IMR-90 (cell line): ENCODE measurements at regions of chr22 and their contacts with region 1.

Region 1: DNA sequence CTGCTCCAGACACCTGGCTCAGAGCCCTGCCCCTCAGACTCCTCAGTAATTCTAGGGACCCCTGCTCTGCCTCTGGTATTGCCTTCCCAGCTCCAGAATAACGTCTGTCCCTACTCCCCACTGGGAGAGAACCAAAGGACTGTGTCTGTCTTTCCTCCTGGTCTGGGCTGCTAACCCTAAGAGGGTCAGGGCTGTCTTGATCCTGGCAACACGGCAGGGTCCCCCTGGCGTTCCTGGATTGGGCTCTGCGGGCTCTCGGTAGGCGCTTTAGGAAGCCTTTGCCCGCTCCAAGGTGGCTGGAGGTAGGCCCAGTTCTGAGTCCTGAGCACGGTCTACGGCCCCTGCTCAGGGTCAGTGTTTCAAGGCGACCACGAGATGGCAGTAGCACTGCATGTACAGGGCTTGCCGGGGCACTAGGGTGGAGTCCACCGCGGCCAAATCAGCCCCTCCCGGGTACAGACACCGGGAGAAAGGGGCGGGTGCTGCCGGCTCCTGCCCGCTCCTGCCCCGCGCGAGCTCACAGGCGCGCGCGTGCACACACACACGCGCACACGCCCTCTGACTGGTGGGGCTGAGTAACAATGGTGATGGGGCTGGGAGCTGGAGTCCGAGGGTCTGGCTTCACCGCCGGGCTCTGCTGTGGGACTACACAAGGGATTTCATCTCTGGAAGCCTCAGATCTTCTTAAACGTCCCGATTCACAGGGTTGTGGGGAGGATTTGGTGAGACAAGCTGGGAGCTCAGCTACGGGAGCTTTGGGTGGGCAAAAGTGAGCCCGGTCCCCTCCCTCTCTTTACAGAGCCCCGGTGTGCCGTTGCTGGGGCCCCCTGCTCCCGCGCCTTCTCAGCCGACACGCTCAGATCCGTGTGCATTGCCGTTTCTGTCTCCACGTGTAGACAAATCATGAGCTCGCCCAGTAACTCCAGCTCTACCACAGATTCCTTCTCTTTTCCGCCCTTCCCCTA is 30.1 kb upstream of the HMOX1 start:
- DNase-seq: peak; percentile 89
- ATAC-seq: peak; percentile 94
- H3K4me3 ChIP-seq: peak overlapping the region; percentile 43
- H3K27ac ChIP-seq: peak overlapping the region; percentile 38
- H3K4me1 ChIP-seq: peaks cover 12% of the 10 kb centered on the region
- H3K27me3 ChIP-seq: no peaks in the 10 kb centered on the region
- CTCF ChIP-seq: peak; percentile 95
- POLR2A ChIP-seq: peak; percentile 60; the same call in 1 of the 2 replicates
- RAD21 ChIP-seq: peak; percentile 95

Region 2: GRCh38 chr22:34858066-34858465 is 492.8 kb before region 1 on chr22:
- CTCF ChIA-PET with region 1: no interaction called
- POLR2A ChIA-PET with region 1: no interaction called
- dilution Hi-C with region 1: no loop called
- in situ Hi-C with region 1: no loop called
- intact Hi-C with region 1: no loop called
- DNase-seq: no peak
- ATAC-seq: no peak
- H3K4me3 ChIP-seq: no peak overlapping the region
- H3K27ac ChIP-seq: no peak overlapping the region
- H3K4me1 ChIP-seq: no peaks in the 10 kb centered on the region
- H3K27me3 ChIP-seq: no peaks in the 10 kb centered on the region
- CTCF ChIP-seq: no peak
- POLR2A ChIP-seq: no peak
- RAD21 ChIP-seq: no peak

Region 3: DNA sequence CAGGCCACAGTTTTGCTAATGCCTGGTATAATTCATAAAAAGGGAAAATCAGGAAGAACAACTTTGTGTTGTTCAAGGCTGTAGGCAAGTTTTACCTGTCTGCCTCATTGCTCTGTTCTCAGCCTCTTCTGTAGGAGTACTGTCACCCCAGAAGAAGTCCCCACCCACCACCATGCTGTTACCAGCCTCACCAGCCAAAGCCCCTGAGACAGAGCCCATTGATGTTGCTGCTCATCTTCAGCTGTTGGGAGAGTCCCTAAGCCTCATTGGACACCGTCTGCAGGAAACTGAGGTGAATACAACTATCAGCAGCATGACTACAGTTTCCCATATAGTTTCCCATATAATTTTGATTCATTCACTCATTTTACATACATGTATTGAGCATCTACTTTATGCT is 62.7 kb before region 1 on chr22:
- CTCF ChIA-PET with region 1: no interaction called
- POLR2A ChIA-PET with region 1: no interaction called
- dilution Hi-C with region 1: no loop called
- in situ Hi-C with region 1: no loop called
- intact Hi-C with region 1: no loop called
- DNase-seq: no peak
- ATAC-seq: no peak
- H3K4me3 ChIP-seq: no peak overlapping the region
- H3K27ac ChIP-seq: no peak overlapping the region
- H3K4me1 ChIP-seq: no peaks in the 10 kb centered on the region
- H3K27me3 ChIP-seq: no peaks in the 10 kb centered on the region
- CTCF ChIP-seq: no peak
- POLR2A ChIP-seq: no peak
- RAD21 ChIP-seq: no peak

Region 4: GRCh38 chr22:35380547-35381423 is 30.0 kb after region 1 on chr22 and contains the start of gene HMOX1:
- CTCF ChIA-PET with region 1: interaction called, 5 read pairs
- POLR2A ChIA-PET with region 1: no interaction called
- dilution Hi-C with region 1: no loop called
- in situ Hi-C with region 1: no loop called
- intact Hi-C with region 1: loop called (anchors 1 kb)
- DNase-seq: peak; percentile 85
- ATAC-seq: peak; percentile 85
- H3K4me3 ChIP-seq: peak within 1 kb of the TSS; percentile 84
- H3K27ac ChIP-seq: peak within 1 kb of the TSS; percentile 73
- H3K4me1 ChIP-seq: peaks cover 32% of the 10 kb centered on the region
- H3K27me3 ChIP-seq: no peaks in the 10 kb centered on the region
- CTCF ChIP-seq: peak; percentile 42; the same call in 1 of the 2 replicates
- POLR2A ChIP-seq: peak; percentile 96
- RAD21 ChIP-seq: peak; percentile 39
- total RNA-seq, gene HMOX1: 16.4 and 23.1 TPM in 2 replicates

Region 5: DNA sequence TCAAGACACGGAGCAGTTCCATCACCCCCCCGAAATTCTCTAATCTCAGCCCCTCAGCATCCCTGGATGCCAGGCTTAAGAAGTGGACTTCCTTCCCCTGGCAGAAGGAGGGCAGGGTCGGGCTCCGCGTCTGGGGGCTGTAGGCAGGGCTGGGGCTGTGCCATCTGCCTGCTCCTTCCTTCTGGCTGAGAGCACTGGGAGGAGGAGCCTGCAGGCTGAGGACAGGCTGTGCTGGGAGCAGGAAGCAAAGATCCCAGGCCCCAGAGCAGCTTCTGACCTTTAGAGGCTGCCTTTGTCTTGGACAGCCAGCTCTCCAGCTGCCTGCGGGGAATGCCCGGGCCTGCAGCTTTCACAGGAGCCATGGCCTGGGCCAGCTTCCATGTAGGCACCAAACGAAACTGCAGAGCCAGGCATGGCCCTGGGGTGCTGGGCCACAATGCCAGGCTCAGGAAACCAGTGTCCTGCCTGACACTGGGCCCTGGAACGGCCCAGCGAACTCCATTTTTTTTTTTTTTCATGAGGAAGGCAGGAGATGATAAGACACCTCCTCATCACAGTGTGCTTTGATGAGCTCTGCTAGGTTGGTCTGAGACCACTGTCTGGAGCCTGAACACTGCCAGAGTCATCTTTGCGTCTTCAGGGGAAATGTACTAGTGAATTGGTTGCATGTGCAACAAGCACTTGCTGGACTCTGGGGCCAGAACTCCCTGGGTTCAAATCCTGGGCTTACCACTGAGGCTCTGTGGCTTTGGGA is 117.0 kb after region 1 on chr22:
- CTCF ChIA-PET with region 1: no interaction called
- POLR2A ChIA-PET with region 1: no interaction called
- dilution Hi-C with region 1: no loop called
- in situ Hi-C with region 1: no loop called
- intact Hi-C with region 1: no loop called
- DNase-seq: peak; percentile 47
- ATAC-seq: peak; percentile 95
- H3K4me3 ChIP-seq: no peak overlapping the region
- H3K27ac ChIP-seq: peak overlapping the region; percentile 55
- H3K4me1 ChIP-seq: peaks cover 7% of the 10 kb centered on the region
- H3K27me3 ChIP-seq: no peaks in the 10 kb centered on the region
- CTCF ChIP-seq: no peak
- POLR2A ChIP-seq: no peak
- RAD21 ChIP-seq: no peak

Region 6: GRCh38 chr22:35582861-35583670 is 232.2 kb after region 1 on chr22:
- CTCF ChIA-PET with region 1: interaction called, 4 read pairs
- POLR2A ChIA-PET with region 1: no interaction called
- dilution Hi-C with region 1: no loop called
- in situ Hi-C with region 1: loop called (anchors 5 kb)
- intact Hi-C with region 1: loop called (anchors 1 kb)
- DNase-seq: peak; percentile 65
- ATAC-seq: peak; percentile 88
- H3K4me3 ChIP-seq: no peak overlapping the region
- H3K27ac ChIP-seq: no peak overlapping the region
- H3K4me1 ChIP-seq: peaks cover 4% of the 10 kb centered on the region
- H3K27me3 ChIP-seq: no peaks in the 10 kb centered on the region
- CTCF ChIP-seq: peak; percentile 91
- POLR2A ChIP-seq: no peak
- RAD21 ChIP-seq: peak; percentile 95

Region 7: DNA sequence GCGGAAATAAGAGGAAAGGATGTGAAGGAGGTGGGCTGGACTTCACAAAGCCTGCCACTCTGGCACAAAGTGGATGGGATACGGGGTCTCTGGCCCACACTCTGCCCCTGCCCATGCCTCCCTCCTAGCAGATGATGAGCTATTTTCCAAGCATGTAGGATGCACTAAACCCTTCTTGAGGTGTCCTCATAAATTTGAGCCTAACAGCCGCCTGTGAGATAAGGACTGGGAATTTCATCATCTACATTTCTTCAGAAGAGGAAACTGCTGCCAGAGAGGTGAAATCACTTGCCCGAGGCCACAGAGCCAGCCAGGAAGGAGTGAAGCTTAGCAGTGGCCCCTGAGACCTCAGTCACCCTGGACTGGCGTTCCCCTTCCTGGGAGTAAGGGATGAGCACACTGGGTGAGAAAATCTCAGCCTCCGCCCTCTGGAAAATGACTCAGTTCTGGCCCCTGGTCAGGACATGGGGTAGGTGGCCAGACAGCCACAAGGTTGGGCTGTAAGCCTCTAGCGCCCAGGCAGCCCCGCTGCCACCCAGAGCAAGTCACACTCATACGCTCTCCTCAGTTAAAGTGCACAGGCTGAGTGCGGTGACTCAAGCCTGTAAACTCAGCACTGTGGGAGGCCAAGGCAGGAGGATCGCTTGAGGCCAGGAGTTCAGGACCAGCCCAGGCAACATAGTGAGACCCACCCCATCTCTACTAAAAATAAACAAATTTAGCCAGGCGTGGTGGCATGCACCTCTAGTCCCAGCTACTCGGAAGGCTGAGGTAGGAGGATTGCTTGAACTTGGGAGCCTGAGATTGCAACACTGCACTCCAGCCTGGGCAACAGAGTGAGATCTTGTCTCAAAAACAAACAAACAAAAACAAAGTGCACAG is 238.5 kb after region 1 on chr22:
- CTCF ChIA-PET with region 1: no interaction called
- POLR2A ChIA-PET with region 1: no interaction called
- dilution Hi-C with region 1: no loop called
- in situ Hi-C with region 1: loop called (anchors 5 kb)
- intact Hi-C with region 1: no loop called
- DNase-seq: peak; percentile 77
- ATAC-seq: peak; percentile 75
- H3K4me3 ChIP-seq: no peak overlapping the region
- H3K27ac ChIP-seq: no peak overlapping the region
- H3K4me1 ChIP-seq: peaks cover 13% of the 10 kb centered on the region; the same call in 1 of the 2 replicates
- H3K27me3 ChIP-seq: peaks cover 6% of the 10 kb centered on the region; the same call in 1 of the 2 replicates
- CTCF ChIP-seq: 0 out of 2 replicates have a peak, but pooled peaks have one; percentile 8
- POLR2A ChIP-seq: no peak
- RAD21 ChIP-seq: no peak

Region 8: GRCh38 chr22:35739076-35739930 is 388.5 kb after region 1 on chr22:
- CTCF ChIA-PET with region 1: no interaction called
- POLR2A ChIA-PET with region 1: no interaction called
- dilution Hi-C with region 1: no loop called
- in situ Hi-C with region 1: no loop called
- intact Hi-C with region 1: loop called (anchors 5 kb)
- DNase-seq: no peak
- ATAC-seq: no peak
- H3K4me3 ChIP-seq: no peak overlapping the region
- H3K27ac ChIP-seq: no peak overlapping the region
- H3K4me1 ChIP-seq: peaks cover 15% of the 10 kb centered on the region
- H3K27me3 ChIP-seq: no peaks in the 10 kb centered on the region
- CTCF ChIP-seq: peak; percentile 20; the same call in 1 of the 2 replicates
- POLR2A ChIP-seq: no peak
- RAD21 ChIP-seq: no peak

Region 9: GRCh38 chr22:35914665-35915476 is 564.0 kb after region 1 on chr22:
- CTCF ChIA-PET with region 1: no interaction called
- POLR2A ChIA-PET with region 1: no interaction called
- dilution Hi-C with region 1: no loop called
- in situ Hi-C with region 1: no loop called
- intact Hi-C with region 1: loop called (anchors 5 kb)
- DNase-seq: peak; percentile 91
- ATAC-seq: peak; percentile 94
- H3K4me3 ChIP-seq: peak overlapping the region; percentile 36
- H3K27ac ChIP-seq: peak overlapping the region; percentile 80
- H3K4me1 ChIP-seq: peaks cover 12% of the 10 kb centered on the region
- H3K27me3 ChIP-seq: no peaks in the 10 kb centered on the region
- CTCF ChIP-seq: no peak
- POLR2A ChIP-seq: no peak
- RAD21 ChIP-seq: no peak